WTC11 (cell line): ENCODE measurements at regions of chr12 and their contacts with region 1.

Region 1: GRCh38 chr12:22700106-22700505 is 75.1 kb downstream of the ETNK1 start:
- DNase-seq: no peak
- ATAC-seq: no peak
- H3K4me3 Mint-ChIP-seq: peak overlapping the region; percentile 37
- H3K27ac Mint-ChIP-seq: peak overlapping the region; percentile 95
- H3K4me1 Mint-ChIP-seq: peaks cover 46% of the 10 kb centered on the region
- H3K27me3 Mint-ChIP-seq: no peaks in the 10 kb centered on the region
- CTCF ChIP-seq: no peak

Region 2: GRCh38 chr12:22684140-22685118 is 15.7 kb before region 1 on chr12:
- CTCF ChIA-PET with region 1: interaction called, 12 read pairs
- POLR2A ChIA-PET with region 1: no interaction called
- DNase-seq: no peak
- ATAC-seq: no peak
- H3K4me3 Mint-ChIP-seq: no peak overlapping the region
- H3K27ac Mint-ChIP-seq: no peak overlapping the region
- H3K4me1 Mint-ChIP-seq: no peaks in the 10 kb centered on the region
- H3K27me3 Mint-ChIP-seq: no peaks in the 10 kb centered on the region
- CTCF ChIP-seq: no peak

Region 3: GRCh38 chr12:22812531-22812930 is 112.4 kb after region 1 on chr12:
- CTCF ChIA-PET with region 1: no interaction called
- POLR2A ChIA-PET with region 1: no interaction called
- DNase-seq: no peak
- ATAC-seq: no peak
- H3K4me3 Mint-ChIP-seq: no peak overlapping the region
- H3K27ac Mint-ChIP-seq: no peak overlapping the region
- H3K4me1 Mint-ChIP-seq: peaks cover 28% of the 10 kb centered on the region
- H3K27me3 Mint-ChIP-seq: no peaks in the 10 kb centered on the region
- CTCF ChIP-seq: no peak